Activated naive CD4-positive, alpha-beta T cell treated with anti-CD3 and anti-CD28 coated beads for 36 hours (primary cell): ENCODE measurements at regions of chr19 and their contacts with region 1.

Region 1: DNA sequence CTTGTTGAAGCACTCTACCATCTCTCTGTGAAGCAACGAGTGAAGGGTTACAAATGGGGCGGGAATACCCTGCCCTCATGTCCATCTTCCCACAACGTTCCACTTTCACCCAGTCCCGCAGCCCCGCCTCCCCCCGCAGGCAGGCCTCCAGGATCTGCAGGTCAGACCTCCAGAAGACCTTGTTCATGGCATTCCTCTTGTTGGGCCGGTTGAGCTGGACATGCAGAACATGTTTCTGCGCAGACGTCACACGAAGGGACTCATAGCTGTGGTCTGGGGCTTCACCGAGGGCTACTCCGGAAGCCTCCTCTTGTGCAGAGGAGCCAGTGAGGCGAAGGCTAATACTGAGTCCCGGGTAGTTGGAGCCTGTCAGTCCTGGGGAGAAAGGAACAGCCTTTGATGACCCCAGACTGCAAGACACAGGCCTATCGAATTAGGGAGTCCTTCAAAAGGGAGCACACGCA is 420 bp downstream of the ECH1 start:
- DNase-seq: peak; percentile 64
- H3K4me3 Mint-ChIP-seq: peak overlapping the region; percentile 79
- H3K27ac Mint-ChIP-seq: peak overlapping the region; percentile 94
- H3K4me1 Mint-ChIP-seq: peaks cover 34% of the 10 kb centered on the region
- H3K27me3 Mint-ChIP-seq: no peaks in the 10 kb centered on the region

Region 2: DNA sequence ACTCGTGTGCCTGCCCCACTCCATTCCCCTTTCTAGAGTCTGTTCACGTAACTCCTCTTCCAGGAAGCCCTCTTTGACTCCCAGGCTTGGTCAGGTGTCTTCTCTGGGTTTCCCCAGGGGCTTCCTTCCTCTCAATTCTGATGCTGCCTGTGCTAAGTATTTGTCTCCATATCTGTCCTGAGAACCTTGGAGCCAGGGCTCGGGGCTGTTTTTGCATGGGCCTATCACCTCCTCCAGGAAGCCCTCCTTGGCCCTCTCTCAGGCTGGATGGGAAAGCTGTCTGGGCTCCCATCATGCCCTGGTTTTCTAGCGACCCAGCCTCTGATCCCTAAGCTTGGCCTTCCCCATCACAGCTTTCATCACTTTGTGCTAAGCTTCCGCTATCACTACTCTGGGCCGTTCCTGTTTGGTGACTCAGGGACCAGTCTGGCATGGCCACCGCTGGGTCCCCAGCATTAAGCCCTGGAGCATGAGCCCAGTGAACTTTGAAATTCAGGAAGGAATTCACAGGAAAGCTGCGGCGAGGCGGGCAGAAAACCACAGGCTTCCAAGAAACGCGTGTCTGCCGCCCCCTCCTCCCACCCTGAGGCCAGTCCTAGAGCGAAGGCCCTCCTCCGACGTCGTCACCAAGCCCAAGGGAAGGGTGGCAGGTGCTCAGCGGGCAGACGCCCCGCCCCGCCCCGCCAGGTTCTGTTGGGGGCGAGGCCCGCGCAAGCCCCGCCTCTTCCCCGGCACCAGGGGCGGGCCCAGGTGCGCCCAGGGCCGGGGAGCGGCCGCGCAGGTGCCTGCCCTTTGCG is 567.3 kb before region 1 on chr19:
- CTCF ChIA-PET with region 1: no interaction called
- intact Hi-C with region 1: no loop called
- DNase-seq: peak; percentile 86
- H3K4me3 Mint-ChIP-seq: peak overlapping the region; percentile 80
- H3K27ac Mint-ChIP-seq: peak overlapping the region; percentile 90
- H3K4me1 Mint-ChIP-seq: peaks cover 34% of the 10 kb centered on the region
- H3K27me3 Mint-ChIP-seq: peaks cover 3% of the 10 kb centered on the region

Region 3: GRCh38 chr19:38769635-38770211 is 61.5 kb before region 1 on chr19:
- CTCF ChIA-PET with region 1: no interaction called
- intact Hi-C with region 1: loop called (anchors 2 kb)
- DNase-seq: peak; percentile 91
- H3K4me3 Mint-ChIP-seq: peak overlapping the region; percentile 47
- H3K27ac Mint-ChIP-seq: no peak overlapping the region
- H3K4me1 Mint-ChIP-seq: peaks cover 6% of the 10 kb centered on the region
- H3K27me3 Mint-ChIP-seq: no peaks in the 10 kb centered on the region

Region 4: DNA sequence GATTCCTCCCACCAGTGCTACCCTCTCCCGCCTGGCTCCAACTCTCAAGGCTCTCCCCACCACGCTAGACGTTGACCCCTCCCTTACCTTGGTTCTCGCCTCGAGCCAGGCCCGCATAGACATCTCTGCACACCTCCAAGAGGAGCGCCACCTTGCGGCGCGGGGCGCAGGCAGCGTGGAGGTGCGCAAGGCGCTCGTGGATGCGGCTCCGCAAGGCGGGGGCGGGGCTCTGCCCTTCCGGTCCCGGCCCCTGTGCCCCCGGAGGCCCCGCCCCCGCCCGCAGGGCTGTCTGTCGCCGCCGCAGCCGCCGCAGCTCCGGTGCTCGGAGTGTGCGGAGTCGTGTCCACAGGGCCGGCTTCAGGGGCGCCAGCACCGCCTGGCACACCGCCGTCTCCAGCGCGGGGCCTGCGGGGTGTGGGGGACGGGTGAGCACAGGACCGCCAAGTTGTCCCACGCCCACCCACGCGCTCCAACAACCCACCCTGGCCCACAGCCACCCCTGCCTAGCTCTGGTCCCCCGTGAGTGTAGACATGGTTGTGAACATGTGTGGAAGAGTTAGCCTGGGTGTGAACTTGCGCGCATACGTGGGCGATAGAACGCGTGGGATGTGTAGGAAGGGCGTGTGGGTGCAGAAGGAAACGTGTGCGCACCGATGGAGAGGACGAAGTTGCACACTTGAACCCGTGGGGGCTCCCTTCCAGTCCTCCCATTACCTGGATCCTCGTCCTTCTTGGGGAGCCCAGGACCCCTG is 38.9 kb after region 1 on chr19:
- CTCF ChIA-PET with region 1: no interaction called
- intact Hi-C with region 1: loop called (anchors 2 kb)
- DNase-seq: peak; percentile 92
- H3K4me3 Mint-ChIP-seq: peak overlapping the region; percentile 89
- H3K27ac Mint-ChIP-seq: peak overlapping the region; percentile 89
- H3K4me1 Mint-ChIP-seq: peaks cover 40% of the 10 kb centered on the region
- H3K27me3 Mint-ChIP-seq: no peaks in the 10 kb centered on the region